H1 (cell line): ENCODE measurements at regions of chr20 and their contacts with region 1.

Region 1: GRCh38 chr20:45436732-45437391 is 20.9 kb downstream of the PIGT start:
- DNase-seq: peak in 1 of 2 experiments; percentile 97
- H3K4me3 ChIP-seq: peak overlapping the region; percentile 17 to 72 (median 61); a peak in 7 of 8 replicates
- H3K27ac ChIP-seq: no peak overlapping the region
- H3K4me1 ChIP-seq: no peaks in the 10 kb centered on the region
- H3K27me3 ChIP-seq: no peaks in the 10 kb centered on the region
- CTCF ChIP-seq: peak; percentile 93 to 97 (median 95)
- EP300 ChIP-seq: no peak
- POLR2A ChIP-seq: no peak
- RAD21 ChIP-seq: peak; percentile 91 to 95

Region 2: DNA sequence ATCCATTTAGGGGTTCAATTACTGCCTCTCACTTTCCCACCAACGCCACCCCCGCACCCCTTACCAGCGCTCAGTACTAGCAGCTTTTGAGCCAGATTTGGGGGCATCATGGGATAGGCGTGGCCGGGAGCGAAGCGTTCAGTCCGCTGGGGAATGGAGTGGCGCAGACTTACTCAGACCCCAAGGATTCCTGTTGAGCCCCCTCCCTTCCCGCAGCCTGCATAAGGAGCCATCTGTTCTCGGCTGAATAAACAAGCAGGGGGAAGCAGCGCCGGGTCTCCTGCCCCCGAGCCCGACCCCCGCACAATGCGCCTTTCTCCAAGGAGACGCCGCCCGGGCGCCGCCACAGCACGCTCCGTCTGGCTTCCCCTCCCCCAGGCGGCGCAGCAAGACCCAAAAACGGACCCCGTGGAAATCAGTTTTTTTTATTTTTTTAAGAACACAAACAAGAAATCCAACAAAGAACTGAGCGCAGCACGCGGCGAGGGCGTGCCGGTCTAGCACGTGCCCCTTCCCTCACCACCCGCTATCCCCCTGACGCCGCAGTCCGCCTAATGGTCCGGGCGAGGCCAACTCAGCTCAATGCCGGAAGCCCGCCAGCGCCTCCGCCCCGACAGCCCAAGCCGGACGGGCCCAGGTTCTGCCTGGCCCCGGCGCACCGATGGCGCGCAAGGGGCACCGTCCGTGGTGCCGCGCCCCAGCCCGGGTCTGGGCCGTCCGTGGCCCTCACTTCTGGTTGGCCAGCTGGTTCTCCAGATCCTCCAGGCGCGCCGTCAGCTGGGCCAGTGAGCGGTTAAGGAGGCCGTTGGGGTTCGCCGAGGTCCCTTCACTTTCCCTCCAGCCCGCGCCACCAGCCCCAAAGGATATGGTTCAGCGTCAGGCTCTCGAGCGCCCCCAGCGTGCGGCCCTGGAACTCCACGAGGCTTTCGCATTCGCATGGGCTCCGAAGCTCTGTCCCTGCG is 143.5 kb before region 1 on chr20:
- CTCF ChIA-PET with region 1: interaction called, 12 read pairs
- POLR2A ChIA-PET with region 1: no interaction called
- DNase-seq: peak; percentile 64 to 99
- H3K4me3 ChIP-seq: peak overlapping the region; percentile 35 to 63 (median 54)
- H3K27ac ChIP-seq: no peak overlapping the region
- H3K4me1 ChIP-seq: peaks cover 0 to 3% (median 0%) of the 10 kb centered on the region in 4 experiments; a peak in 3 of 7 replicates
- H3K27me3 ChIP-seq: peaks cover 0 to 20% (median 11%) of the 10 kb centered on the region in 4 experiments; a peak in 6 of 7 replicates
- CTCF ChIP-seq: peak; percentile 88 to 96 (median 89)
- EP300 ChIP-seq: no peak
- POLR2A ChIP-seq: peak in 1 of 2 experiments; percentile 76; a peak in 2 of 3 replicates
- RAD21 ChIP-seq: peak; percentile 37 to 50

Region 3: DNA sequence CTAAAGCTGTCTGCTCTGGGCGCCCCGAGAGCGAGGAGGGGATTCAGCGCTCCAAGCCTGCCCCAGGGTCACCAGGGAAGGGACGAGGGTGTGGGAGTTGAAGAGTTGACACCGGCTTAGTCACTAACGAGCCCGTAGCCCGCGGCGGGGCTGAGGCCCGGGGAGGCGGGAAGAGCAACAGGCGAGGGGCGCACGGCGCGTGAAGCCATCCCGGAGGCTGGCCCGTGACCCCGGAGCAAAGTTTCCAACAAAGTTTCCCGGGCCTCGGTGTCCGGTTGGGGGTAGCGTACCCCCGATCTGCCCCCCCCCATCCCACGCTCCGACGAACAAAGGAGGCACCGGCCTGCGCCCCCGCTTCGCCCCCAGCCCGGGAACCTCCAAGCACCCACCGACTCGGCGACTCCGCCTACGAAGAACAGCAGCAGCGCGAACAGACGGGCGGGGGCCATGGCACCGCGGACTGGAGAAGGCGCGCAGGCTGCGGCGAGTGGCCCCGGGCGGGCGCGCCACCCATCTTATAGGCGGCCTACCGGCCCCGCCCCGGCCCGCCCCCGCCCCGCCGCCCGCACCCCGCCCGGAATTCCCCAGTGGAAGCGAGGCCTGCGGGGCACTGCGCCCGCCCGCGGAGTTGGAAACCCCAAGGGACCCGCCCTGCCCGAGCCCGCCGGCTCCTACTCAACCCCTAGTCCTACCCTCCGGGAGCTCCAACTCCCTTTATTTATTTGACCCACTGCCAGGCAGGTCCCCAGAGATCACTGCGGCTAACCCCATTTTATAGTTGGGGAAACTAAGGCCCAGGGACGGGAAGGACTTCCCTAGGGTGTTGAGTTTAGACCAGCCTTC is 88.7 kb before region 1 on chr20 and contains the start of gene SDC4:
- CTCF ChIA-PET with region 1: interaction called, 33 read pairs
- POLR2A ChIA-PET with region 1: interaction called, 3 read pairs
- DNase-seq: peak in 1 of 2 experiments; percentile 63
- H3K4me3 ChIP-seq: peak within 1 kb of the TSS; percentile 68 to 95 (median 72)
- H3K27ac ChIP-seq: peak within 1 kb of the TSS; percentile 10; the same call in 1 of the 2 replicates
- H3K4me1 ChIP-seq: peaks cover 26 to 45% (median 35%) of the 10 kb centered on the region in 4 experiments
- H3K27me3 ChIP-seq: no peaks in the 10 kb centered on the region
- CTCF ChIP-seq: no peak
- EP300 ChIP-seq: no peak
- POLR2A ChIP-seq: peak; percentile 96
- RAD21 ChIP-seq: no peak
- total RNA-seq, gene SDC4: 59.2 and 60.2 TPM in 2 replicates

Region 4: GRCh38 chr20:45373353-45374100 is 63.3 kb before region 1 on chr20:
- CTCF ChIA-PET with region 1: interaction called, 186 read pairs
- POLR2A ChIA-PET with region 1: interaction called, 3 read pairs
- DNase-seq: peak; percentile 70 to 96
- H3K4me3 ChIP-seq: peak overlapping the region; percentile 27 to 63 (median 45); a peak in 7 of 8 replicates
- H3K27ac ChIP-seq: no peak overlapping the region
- H3K4me1 ChIP-seq: peaks cover 0 to 16% (median 9%) of the 10 kb centered on the region in 4 experiments; a peak in 6 of 7 replicates
- H3K27me3 ChIP-seq: peaks cover 0 to 12% (median 9%) of the 10 kb centered on the region in 4 experiments; a peak in 3 of 7 replicates
- CTCF ChIP-seq: peak; percentile 88 to 96 (median 92)
- EP300 ChIP-seq: no peak
- POLR2A ChIP-seq: no peak
- RAD21 ChIP-seq: peak; percentile 77 to 85

Region 5: DNA sequence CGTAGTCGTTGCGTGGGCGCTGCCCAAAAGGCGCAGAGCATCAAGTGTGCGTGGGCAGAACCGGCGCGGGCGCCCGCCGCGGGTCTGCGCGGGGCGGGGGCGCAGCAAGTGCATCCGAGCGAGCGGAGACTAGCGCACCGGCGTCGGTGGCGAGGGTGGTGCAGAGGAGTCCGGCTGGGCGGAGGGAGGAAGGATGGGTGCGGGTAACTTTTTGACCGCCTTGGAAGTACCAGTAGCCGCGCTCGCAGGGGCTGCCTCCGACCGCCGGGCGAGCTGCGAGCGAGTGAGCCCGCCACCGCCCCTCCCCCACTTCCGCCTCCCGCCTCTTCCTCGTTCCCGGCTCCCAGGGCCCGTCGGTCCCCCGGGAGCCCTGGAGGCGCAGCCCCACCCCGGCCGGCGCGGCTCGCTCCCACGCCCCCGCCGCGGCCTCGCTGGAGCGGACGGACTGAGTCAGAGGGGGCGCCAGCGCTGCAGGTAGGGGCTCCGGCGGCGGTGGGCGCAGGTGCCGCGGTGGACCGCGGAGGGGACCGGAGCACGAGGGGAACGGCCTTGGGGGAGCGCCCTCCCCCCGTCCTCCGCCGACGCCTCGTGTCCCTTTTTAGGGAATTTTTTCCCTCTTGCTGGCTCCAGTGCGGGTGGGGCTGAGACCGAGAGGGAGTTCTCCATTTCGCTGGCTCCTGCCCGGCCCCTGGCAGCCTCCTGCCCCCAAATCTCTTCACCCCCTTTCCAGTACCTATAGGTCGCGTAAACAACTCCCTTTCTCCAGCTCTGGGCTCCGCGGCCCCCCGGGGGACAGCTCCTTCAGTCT is 30.4 kb before region 1 on chr20:
- CTCF ChIA-PET with region 1: interaction called, 22 read pairs
- POLR2A ChIA-PET with region 1: interaction called, 10 read pairs
- DNase-seq: peak in 1 of 2 experiments; percentile 78
- H3K4me3 ChIP-seq: peak overlapping the region; percentile 82 to 86 (median 84)
- H3K27ac ChIP-seq: 0 out of 2 replicates have a peak overlapping the region, but pooled peaks have one; percentile 29
- H3K4me1 ChIP-seq: peaks cover 0 to 8% (median 3%) of the 10 kb centered on the region in 4 experiments; a peak in 4 of 7 replicates
- H3K27me3 ChIP-seq: peaks cover 2 to 20% (median 10%) of the 10 kb centered on the region in 4 experiments; a peak in 6 of 7 replicates
- CTCF ChIP-seq: no peak
- EP300 ChIP-seq: no peak
- POLR2A ChIP-seq: peak; percentile 36 to 60; a peak in 2 of 3 replicates
- RAD21 ChIP-seq: no peak

Region 6: DNA sequence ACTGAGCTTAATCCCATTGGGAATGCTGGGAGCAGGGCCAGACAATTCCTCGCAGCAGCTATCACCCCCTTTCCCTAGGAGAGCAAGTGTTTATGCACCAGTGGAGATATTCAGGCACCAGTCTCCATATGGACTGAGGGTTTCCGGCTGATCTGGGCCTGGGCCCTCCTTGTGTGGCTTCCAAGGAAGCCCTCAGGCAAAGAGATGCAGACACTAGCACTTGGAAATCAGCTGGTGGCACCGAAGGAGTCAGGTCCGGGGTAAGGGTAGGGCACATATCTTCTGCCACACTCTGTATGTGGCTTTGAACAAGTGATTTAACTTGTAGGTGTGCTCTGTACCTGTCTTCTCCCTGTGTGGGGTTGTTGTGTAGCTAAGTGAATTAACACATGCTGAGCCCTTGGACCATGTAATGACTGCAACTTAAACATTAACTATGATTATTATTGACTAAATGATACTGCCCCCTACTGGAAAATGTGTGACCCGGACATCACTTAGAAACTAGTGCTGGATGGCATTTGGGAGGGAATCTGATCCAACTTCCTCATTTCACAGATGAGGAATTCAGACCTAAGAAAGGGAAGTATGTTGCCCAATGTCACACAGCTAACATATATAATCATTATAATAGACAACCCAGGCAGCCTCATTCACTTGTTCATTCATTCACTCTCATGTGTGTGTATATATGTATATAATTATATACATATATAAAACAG is 13.4 kb after region 1 on chr20:
- CTCF ChIA-PET with region 1: interaction called, 178 read pairs
- POLR2A ChIA-PET with region 1: interaction called, 6 read pairs
- DNase-seq: no peak
- H3K4me3 ChIP-seq: no peak overlapping the region
- H3K27ac ChIP-seq: no peak overlapping the region
- H3K4me1 ChIP-seq: no peaks in the 10 kb centered on the region; a peak in 1 of 7 replicates
- H3K27me3 ChIP-seq: no peaks in the 10 kb centered on the region
- CTCF ChIP-seq: peak in 2 of 3 experiments; percentile 56 to 73; a peak in 3 of 4 replicates
- EP300 ChIP-seq: no peak
- POLR2A ChIP-seq: no peak
- RAD21 ChIP-seq: peak; percentile 43 to 49

Region 7: DNA sequence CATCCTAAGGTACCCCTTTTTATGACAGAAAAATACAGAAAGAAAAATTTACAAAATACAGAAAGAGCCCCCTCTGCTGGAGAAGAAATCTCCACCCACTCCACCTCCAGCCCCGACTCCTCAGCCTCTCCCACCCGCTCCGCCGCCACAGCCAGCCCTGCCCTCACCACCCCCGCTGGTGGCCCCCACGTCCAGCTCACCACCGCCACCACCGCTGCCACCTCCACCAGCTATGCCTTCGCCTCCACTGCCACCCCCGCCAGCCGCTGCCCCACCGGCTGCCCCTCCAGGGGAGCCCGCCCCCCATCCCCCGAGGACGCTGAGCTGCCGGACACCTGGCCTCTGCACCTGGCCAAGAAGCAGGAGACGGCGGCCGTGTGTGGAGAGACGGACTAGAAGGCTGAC is 50.4 kb after region 1 on chr20:
- CTCF ChIA-PET with region 1: interaction called, 23 read pairs
- POLR2A ChIA-PET with region 1: no interaction called
- DNase-seq: peak in 1 of 2 experiments; percentile 77
- H3K4me3 ChIP-seq: peak overlapping the region; percentile 38 to 60 (median 43)
- H3K27ac ChIP-seq: no peak overlapping the region
- H3K4me1 ChIP-seq: peaks cover 0 to 11% (median 0%) of the 10 kb centered on the region in 4 experiments; a peak in 2 of 7 replicates
- H3K27me3 ChIP-seq: no peaks in the 10 kb centered on the region
- CTCF ChIP-seq: peak; percentile 26 to 46 (median 46); a peak in 3 of 4 replicates
- EP300 ChIP-seq: no peak
- POLR2A ChIP-seq: no peak
- RAD21 ChIP-seq: peak; percentile 37 to 46